ENCODE measurements at regions of chr2 and their contacts with region 1.

Region 1: GRCh38 chr2:164697674-164698461 is 76.6 kb upstream of the GRB14 start:
- DNase-seq: peak; percentile 61
- ATAC-seq: peak; percentile 65
- H3K4me3 ChIP-seq: no peak overlapping the region
- H3K27ac ChIP-seq: peak overlapping the region; percentile 11
- H3K4me1 ChIP-seq: peaks cover 65% of the 10 kb centered on the region
- H3K27me3 ChIP-seq: no peaks in the 10 kb centered on the region
- CTCF ChIP-seq: peak; percentile 72
- EP300 ChIP-seq: no peak; a peak in 1 of 4 replicates
- POLR2A ChIP-seq: no peak
- RAD21 ChIP-seq: peak; percentile 50; the same call in 1 of the 2 replicates

Region 2: GRCh38 chr2:164717000-164717803 is 19.3 kb after region 1 on chr2:
- CTCF ChIA-PET with region 1: interaction called, 46 read pairs
- POLR2A ChIA-PET with region 1: no interaction called
- in situ Hi-C with region 1: no loop called
- intact Hi-C with region 1: loop called (anchors 1 kb)
- DNase-seq: peak; percentile 50
- ATAC-seq: no peak
- H3K4me3 ChIP-seq: no peak overlapping the region
- H3K27ac ChIP-seq: peak overlapping the region; percentile 20
- H3K4me1 ChIP-seq: peaks cover 48% of the 10 kb centered on the region
- H3K27me3 ChIP-seq: no peaks in the 10 kb centered on the region
- CTCF ChIP-seq: peak; percentile 59
- EP300 ChIP-seq: no peak
- POLR2A ChIP-seq: no peak
- RAD21 ChIP-seq: peak; percentile 70; the same call in 1 of the 2 replicates